ENCODE measurements at regions of chr12 and their contacts with region 1.

Region 1: GRCh38 chr12:14365294-14366208 is at the start of gene ATF7IP:
- DNase-seq: peak; percentile 83
- ATAC-seq: peak; percentile 77
- H3K4me3 ChIP-seq: peak within 1 kb of the TSS; percentile 59
- H3K27ac ChIP-seq: peak within 1 kb of the TSS; percentile 89
- H3K4me1 ChIP-seq: peaks cover 12% of the 10 kb centered on the region
- H3K27me3 ChIP-seq: no peaks in the 10 kb centered on the region
- CTCF ChIP-seq: peak in 2 of 3 experiments; percentile 27 to 32; a peak in 3 of 6 replicates
- EP300 ChIP-seq: peak; percentile 30 to 83; a peak in 2 of 4 replicates
- POLR2A ChIP-seq: peak; percentile 91
- RAD21 ChIP-seq: peak; percentile 54
- polyA plus RNA-seq, gene ATF7IP: 6.2 to 8.1 TPM

Region 2: GRCh38 chr12:14185427-14186192 is 179.9 kb before region 1 on chr12:
- CTCF ChIA-PET with region 1: interaction called, 18 read pairs
- POLR2A ChIA-PET with region 1: no interaction called
- RAD21 ChIA-PET with region 1: interaction called, 8 read pairs
- SMC1A ChIA-PET with region 1: interaction called, 10 read pairs
- in situ Hi-C with region 1: no loop called
- intact Hi-C with region 1: no loop called
- DNase-seq: no peak
- ATAC-seq: peak; percentile 91
- H3K4me3 ChIP-seq: no peak overlapping the region
- H3K27ac ChIP-seq: no peak overlapping the region
- H3K4me1 ChIP-seq: peaks cover 4% of the 10 kb centered on the region; the same call in 1 of the 2 replicates
- H3K27me3 ChIP-seq: no peaks in the 10 kb centered on the region
- CTCF ChIP-seq: peak; percentile 65 to 85 (median 68)
- EP300 ChIP-seq: no peak
- POLR2A ChIP-seq: no peak
- RAD21 ChIP-seq: peak; percentile 67

Region 3: GRCh38 chr12:14284184-14284722 is 81.3 kb before region 1 on chr12:
- CTCF ChIA-PET with region 1: interaction called, 7 read pairs
- POLR2A ChIA-PET with region 1: interaction called, 6 read pairs
- RAD21 ChIA-PET with region 1: interaction called, 11 read pairs
- SMC1A ChIA-PET with region 1: interaction called, 8 read pairs
- in situ Hi-C with region 1: no loop called
- intact Hi-C with region 1: loop called (anchors 2 kb)
- DNase-seq: peak; percentile 40
- ATAC-seq: peak; percentile 86
- H3K4me3 ChIP-seq: peak overlapping the region; percentile 51; the same call in 1 of the 2 replicates
- H3K27ac ChIP-seq: peak overlapping the region; percentile 98
- H3K4me1 ChIP-seq: peaks cover 29% of the 10 kb centered on the region
- H3K27me3 ChIP-seq: no peaks in the 10 kb centered on the region
- CTCF ChIP-seq: 0 out of 6 replicates have a peak, but pooled peaks of 1 of the 3 experiments have one; percentile 18
- EP300 ChIP-seq: no peak
- POLR2A ChIP-seq: peak; percentile 72
- RAD21 ChIP-seq: peak; percentile 53

Region 4: GRCh38 chr12:14303661-14304155 is 61.8 kb before region 1 on chr12:
- CTCF ChIA-PET with region 1: no interaction called
- POLR2A ChIA-PET with region 1: no interaction called
- RAD21 ChIA-PET with region 1: no interaction called
- SMC1A ChIA-PET with region 1: no interaction called
- in situ Hi-C with region 1: no loop called
- intact Hi-C with region 1: no loop called
- DNase-seq: no peak
- ATAC-seq: no peak
- H3K4me3 ChIP-seq: no peak overlapping the region
- H3K27ac ChIP-seq: no peak overlapping the region
- H3K4me1 ChIP-seq: no peaks in the 10 kb centered on the region
- H3K27me3 ChIP-seq: no peaks in the 10 kb centered on the region
- CTCF ChIP-seq: no peak
- EP300 ChIP-seq: no peak
- POLR2A ChIP-seq: no peak
- RAD21 ChIP-seq: no peak

Region 5: GRCh38 chr12:14394317-14395073 is 28.9 kb after region 1 on chr12:
- CTCF ChIA-PET with region 1: interaction called, 11 read pairs
- POLR2A ChIA-PET with region 1: interaction called, 29 read pairs
- RAD21 ChIA-PET with region 1: interaction called, 44 read pairs
- SMC1A ChIA-PET with region 1: interaction called, 64 read pairs
- in situ Hi-C with region 1: no loop called
- intact Hi-C with region 1: loop called (anchors 2 kb)
- DNase-seq: peak; percentile 65
- ATAC-seq: peak; percentile 77
- H3K4me3 ChIP-seq: 0 out of 2 replicates have a peak overlapping the region, but pooled peaks have one; percentile 18
- H3K27ac ChIP-seq: peak overlapping the region; percentile 82
- H3K4me1 ChIP-seq: peaks cover 11% of the 10 kb centered on the region; the same call in 1 of the 2 replicates
- H3K27me3 ChIP-seq: no peaks in the 10 kb centered on the region
- CTCF ChIP-seq: no peak; a peak in 1 of 6 replicates
- EP300 ChIP-seq: no peak
- POLR2A ChIP-seq: 0 out of 2 replicates have a peak, but pooled peaks have one; percentile 22
- RAD21 ChIP-seq: no peak

Region 6: GRCh38 chr12:14454098-14454907 is 88.8 kb after region 1 on chr12:
- CTCF ChIA-PET with region 1: interaction called, 40 read pairs
- POLR2A ChIA-PET with region 1: interaction called, 9 read pairs
- RAD21 ChIA-PET with region 1: interaction called, 41 read pairs
- SMC1A ChIA-PET with region 1: interaction called, 53 read pairs
- in situ Hi-C with region 1: no loop called
- intact Hi-C with region 1: loop called (anchors 1 kb)
- DNase-seq: peak; percentile 30
- ATAC-seq: peak; percentile 97
- H3K4me3 ChIP-seq: no peak overlapping the region
- H3K27ac ChIP-seq: no peak overlapping the region
- H3K4me1 ChIP-seq: no peaks in the 10 kb centered on the region
- H3K27me3 ChIP-seq: no peaks in the 10 kb centered on the region
- CTCF ChIP-seq: peak; percentile 69 to 96 (median 83); a peak in 5 of 6 replicates
- EP300 ChIP-seq: no peak
- POLR2A ChIP-seq: no peak
- RAD21 ChIP-seq: peak; percentile 86

Region 7: DNA sequence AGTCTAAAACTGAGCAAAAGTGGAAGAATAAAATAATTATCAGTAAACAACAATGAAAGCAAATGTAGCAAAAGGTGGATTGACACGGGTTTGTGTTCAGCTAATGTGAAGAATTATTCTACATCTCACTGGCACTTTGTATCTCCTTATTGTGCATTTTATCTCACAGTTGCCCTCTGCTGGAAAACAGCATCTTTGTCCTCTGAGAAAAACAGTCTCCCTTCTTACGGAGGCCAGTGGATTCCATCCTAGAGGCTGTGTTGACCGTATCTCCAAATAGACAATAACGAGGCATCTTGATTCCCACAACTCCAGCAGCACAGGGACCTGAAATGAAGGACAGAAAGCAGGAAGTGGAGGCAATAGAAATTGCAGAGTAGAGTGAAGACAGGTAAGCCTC is 253.4 kb after region 1 on chr12:
- CTCF ChIA-PET with region 1: interaction called, 3 read pairs
- POLR2A ChIA-PET with region 1: no interaction called
- RAD21 ChIA-PET with region 1: interaction called, 6 read pairs
- SMC1A ChIA-PET with region 1: no interaction called
- in situ Hi-C with region 1: loop called (anchors 5 kb)
- intact Hi-C with region 1: loop called (anchors 5 kb)
- DNase-seq: no peak
- ATAC-seq: no peak
- H3K4me3 ChIP-seq: no peak overlapping the region
- H3K27ac ChIP-seq: no peak overlapping the region
- H3K4me1 ChIP-seq: peaks cover 23% of the 10 kb centered on the region
- H3K27me3 ChIP-seq: no peaks in the 10 kb centered on the region
- CTCF ChIP-seq: 0 out of 6 replicates have a peak, but pooled peaks of 1 of the 3 experiments have one; percentile 16
- EP300 ChIP-seq: no peak
- POLR2A ChIP-seq: no peak
- RAD21 ChIP-seq: peak; percentile 48

Region 8: DNA sequence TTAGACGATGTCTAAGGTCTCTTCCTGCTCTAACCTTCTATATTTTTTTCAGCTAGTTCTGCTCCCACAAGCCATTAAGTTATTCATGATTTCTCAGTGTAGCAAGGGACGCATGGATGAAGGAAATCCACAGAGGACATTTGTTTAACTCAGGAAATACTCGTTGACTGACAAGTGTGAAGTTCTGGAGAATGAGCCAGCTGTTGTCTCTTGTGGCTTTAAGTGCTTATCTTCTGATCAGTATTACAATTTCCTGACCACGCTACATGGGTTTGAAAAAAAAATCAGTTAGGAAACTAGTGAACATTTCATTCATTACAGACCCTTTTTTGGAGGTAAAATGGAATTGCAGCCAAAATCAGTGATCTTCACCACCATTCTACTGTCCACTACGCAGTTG is 277.7 kb after region 1 on chr12:
- CTCF ChIA-PET with region 1: no interaction called
- POLR2A ChIA-PET with region 1: no interaction called
- RAD21 ChIA-PET with region 1: no interaction called
- SMC1A ChIA-PET with region 1: no interaction called
- in situ Hi-C with region 1: no loop called
- intact Hi-C with region 1: no loop called
- DNase-seq: no peak
- ATAC-seq: no peak
- H3K4me3 ChIP-seq: no peak overlapping the region
- H3K27ac ChIP-seq: no peak overlapping the region
- H3K4me1 ChIP-seq: no peaks in the 10 kb centered on the region; the same call in none of the 2 replicates
- H3K27me3 ChIP-seq: no peaks in the 10 kb centered on the region
- CTCF ChIP-seq: no peak
- EP300 ChIP-seq: no peak
- POLR2A ChIP-seq: no peak
- RAD21 ChIP-seq: no peak

Region 9: GRCh38 chr12:14756334-14757143 is 391.0 kb after region 1 on chr12:
- CTCF ChIA-PET with region 1: no interaction called
- POLR2A ChIA-PET with region 1: no interaction called
- RAD21 ChIA-PET with region 1: no interaction called
- SMC1A ChIA-PET with region 1: no interaction called
- in situ Hi-C with region 1: no loop called
- intact Hi-C with region 1: no loop called
- DNase-seq: no peak
- ATAC-seq: no peak
- H3K4me3 ChIP-seq: no peak overlapping the region
- H3K27ac ChIP-seq: no peak overlapping the region
- H3K4me1 ChIP-seq: no peaks in the 10 kb centered on the region
- H3K27me3 ChIP-seq: no peaks in the 10 kb centered on the region
- CTCF ChIP-seq: peak in 2 of 3 experiments; percentile 6 to 16; a peak in 1 of 6 replicates
- EP300 ChIP-seq: no peak
- POLR2A ChIP-seq: no peak
- RAD21 ChIP-seq: no peak

Measured in GM12878 (cell line).